Dorsolateral prefrontal cortex (tissue), 120 donors: ENCODE measurements at regions of chr10 and their contacts with region 1.

Region 1: DNA sequence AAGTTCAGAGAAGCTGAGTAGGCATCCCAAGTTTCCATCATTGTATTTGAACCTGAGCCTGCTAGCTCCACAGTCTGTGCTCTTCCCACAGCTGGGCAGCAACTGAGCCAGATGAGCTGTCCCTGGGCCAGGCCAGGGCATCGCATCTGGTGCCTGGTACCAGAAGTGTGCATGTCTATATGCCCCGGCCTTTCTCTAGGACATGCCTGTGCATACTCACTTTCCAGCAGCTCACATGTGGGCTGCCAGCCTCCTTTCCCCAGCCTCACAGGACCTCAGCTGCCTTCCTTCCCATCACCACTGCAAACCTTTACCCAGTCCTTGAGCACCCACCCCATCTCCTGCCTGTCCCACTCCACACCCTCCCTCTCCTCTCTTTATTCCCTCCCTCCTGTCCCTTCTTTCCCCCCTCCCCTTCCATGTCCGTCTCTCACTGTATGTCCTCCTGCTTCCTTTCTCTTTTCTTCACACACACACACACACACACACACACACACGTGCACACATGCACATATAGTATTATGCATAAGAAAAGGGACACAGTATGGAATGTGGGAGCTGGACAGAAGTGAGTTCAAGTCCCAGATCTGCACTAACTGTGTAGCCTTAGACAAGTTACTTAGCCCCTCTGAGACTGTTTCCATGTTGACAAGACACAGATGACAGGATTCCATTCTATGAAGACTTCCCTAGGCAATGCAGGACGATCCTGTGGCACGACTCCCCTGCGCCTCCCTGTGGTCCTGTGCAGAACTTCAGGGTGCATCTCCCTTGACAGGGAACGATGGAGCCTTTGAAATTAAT is 10.9 kb downstream of the CDHR1 start:
- DNase-seq: peak; percentile 45 to 84 (median 76)
- H3K4me3 ChIP-seq: no peak overlapping the region
- H3K27ac ChIP-seq: peak overlapping the region in 1 of 59 donors; percentile 3
- H3K27me3 ChIP-seq: no peaks in the 10 kb centered on the region
- CTCF ChIP-seq: peak; percentile 47 to 92 (median 81)

Region 2: GRCh38 chr10:84147347-84147746 is 57.9 kb before region 1 on chr10:
- intact Hi-C with region 1: loop called (anchors 2 to 5 kb)
- DNase-seq: no peak
- H3K4me3 ChIP-seq: no peak overlapping the region
- H3K27ac ChIP-seq: no peak overlapping the region
- H3K27me3 ChIP-seq: no peaks in the 10 kb centered on the region
- CTCF ChIP-seq: no peak

Region 3: GRCh38 chr10:84152769-84153168 is 52.5 kb before region 1 on chr10:
- intact Hi-C with region 1: loop called (anchors 2 to 5 kb)
- DNase-seq: no peak
- H3K4me3 ChIP-seq: no peak overlapping the region
- H3K27ac ChIP-seq: no peak overlapping the region
- H3K27me3 ChIP-seq: no peaks in the 10 kb centered on the region
- CTCF ChIP-seq: no peak

Region 4: GRCh38 chr10:84493951-84494848 is 288.9 kb after region 1 on chr10:
- intact Hi-C with region 1: no loop called
- DNase-seq: no peak
- H3K4me3 ChIP-seq: no peak overlapping the region
- H3K27ac ChIP-seq: peak overlapping the region in 12 of 59 donors; percentile 6 to 70 (median 28)
- H3K27me3 ChIP-seq: no peaks in the 10 kb centered on the region
- CTCF ChIP-seq: no peak

Region 5: DNA sequence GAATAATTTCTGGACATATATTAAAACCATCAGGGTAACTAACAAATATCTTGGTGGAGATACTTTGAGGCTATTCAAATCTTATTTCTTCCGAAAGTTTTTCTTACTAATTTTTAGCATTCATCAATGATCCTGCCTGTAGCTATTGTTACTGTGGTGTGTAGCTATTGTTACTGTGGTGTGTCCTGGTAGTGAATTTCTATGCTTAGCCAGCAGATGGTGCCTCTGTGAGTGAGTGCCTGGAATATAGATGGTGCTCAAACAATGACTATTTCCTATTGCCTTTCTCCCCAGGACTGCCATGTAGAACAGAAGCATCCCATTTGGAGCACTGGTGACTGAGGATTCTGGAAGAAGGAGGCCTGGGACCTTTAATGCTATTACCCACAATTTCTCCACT is 368.9 kb after region 1 on chr10:
- intact Hi-C with region 1: no loop called
- DNase-seq: no peak
- H3K4me3 ChIP-seq: no peak overlapping the region
- H3K27ac ChIP-seq: no peak overlapping the region
- H3K27me3 ChIP-seq: peaks cover 0 to 4% (median 0%) of the 10 kb centered on the region in 45 donors
- CTCF ChIP-seq: peak in 2 of 56 donors; percentile 9 to 11

Region 6: GRCh38 chr10:85642421-85643170 is 1437.3 kb after region 1 on chr10:
- intact Hi-C with region 1: no loop called
- DNase-seq: no peak
- H3K4me3 ChIP-seq: no peak overlapping the region
- H3K27ac ChIP-seq: peak overlapping the region in 31 of 59 donors; percentile 1 to 65 (median 30)
- H3K27me3 ChIP-seq: no peaks in the 10 kb centered on the region
- CTCF ChIP-seq: no peak